Activated B cell treated with CpG ODN at 0.5 μM for 24 hours (primary cell): ENCODE measurements at regions of chr1 and their contacts with region 1.

Region 1: GRCh38 chr1:23184212-23184934 is 15.7 kb upstream of the LUZP1 start:
- DNase-seq: peak; percentile 24
- ATAC-seq: peak; percentile 37
- H3K4me3 Mint-ChIP-seq: peak overlapping the region; percentile 72
- H3K27ac Mint-ChIP-seq: no peak overlapping the region
- H3K4me1 Mint-ChIP-seq: peaks cover 4% of the 10 kb centered on the region
- H3K27me3 Mint-ChIP-seq: peaks cover 5% of the 10 kb centered on the region
- CTCF ChIP-seq: no peak

Region 2: GRCh38 chr1:22704440-22705067 is 479.8 kb before region 1 on chr1:
- CTCF ChIA-PET with region 1: interaction called, 9 read pairs
- POLR2A ChIA-PET with region 1: no interaction called
- intact Hi-C with region 1: loop called (anchors 10 kb)
- DNase-seq: peak; percentile 30
- ATAC-seq: peak; percentile 97
- H3K4me3 Mint-ChIP-seq: no peak overlapping the region
- H3K27ac Mint-ChIP-seq: no peak overlapping the region
- H3K4me1 Mint-ChIP-seq: no peaks in the 10 kb centered on the region
- H3K27me3 Mint-ChIP-seq: peaks cover 30% of the 10 kb centered on the region
- CTCF ChIP-seq: peak; percentile 33

Region 3: DNA sequence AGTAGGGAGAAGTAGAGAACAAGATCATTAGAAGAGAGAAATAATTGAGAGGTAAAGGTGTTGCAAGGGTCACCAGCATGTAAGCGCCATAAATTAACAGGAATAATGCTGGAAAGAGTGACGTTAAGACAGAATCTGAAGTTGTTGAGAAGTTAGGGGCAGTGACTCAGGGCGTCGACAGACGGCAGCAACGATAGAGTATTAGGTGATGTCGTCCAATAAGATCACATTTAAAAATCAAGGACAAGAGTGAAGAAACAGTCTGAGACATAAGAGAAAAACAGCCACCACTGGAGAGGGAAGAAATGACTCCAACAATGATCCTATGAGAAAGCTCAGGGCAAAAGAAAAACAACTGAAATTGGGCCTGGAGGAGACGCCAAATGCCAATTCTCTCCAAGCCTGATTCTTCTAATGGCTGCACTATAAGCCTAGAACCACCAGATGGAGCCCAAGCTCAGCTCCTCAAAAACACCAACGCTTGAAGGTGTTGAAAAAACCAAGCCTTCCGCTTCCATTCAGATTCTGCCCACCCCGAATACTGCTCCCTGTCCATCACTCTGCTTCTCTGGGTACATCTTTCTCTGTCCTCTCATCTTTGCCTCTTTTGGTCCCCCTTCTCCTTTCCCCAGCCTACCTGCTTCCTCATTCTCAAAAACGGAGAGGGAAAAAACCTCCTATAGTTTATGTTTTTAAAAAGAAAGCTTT is 85.8 kb before region 1 on chr1:
- CTCF ChIA-PET with region 1: interaction called, 407 read pairs
- POLR2A ChIA-PET with region 1: interaction called, 9 read pairs
- intact Hi-C with region 1: loop called (anchors 1 kb)
- DNase-seq: no peak
- ATAC-seq: peak; percentile 83
- H3K4me3 Mint-ChIP-seq: no peak overlapping the region
- H3K27ac Mint-ChIP-seq: peak overlapping the region; percentile 43
- H3K4me1 Mint-ChIP-seq: peaks cover 20% of the 10 kb centered on the region
- H3K27me3 Mint-ChIP-seq: no peaks in the 10 kb centered on the region
- CTCF ChIP-seq: peak; percentile 85

Region 4: DNA sequence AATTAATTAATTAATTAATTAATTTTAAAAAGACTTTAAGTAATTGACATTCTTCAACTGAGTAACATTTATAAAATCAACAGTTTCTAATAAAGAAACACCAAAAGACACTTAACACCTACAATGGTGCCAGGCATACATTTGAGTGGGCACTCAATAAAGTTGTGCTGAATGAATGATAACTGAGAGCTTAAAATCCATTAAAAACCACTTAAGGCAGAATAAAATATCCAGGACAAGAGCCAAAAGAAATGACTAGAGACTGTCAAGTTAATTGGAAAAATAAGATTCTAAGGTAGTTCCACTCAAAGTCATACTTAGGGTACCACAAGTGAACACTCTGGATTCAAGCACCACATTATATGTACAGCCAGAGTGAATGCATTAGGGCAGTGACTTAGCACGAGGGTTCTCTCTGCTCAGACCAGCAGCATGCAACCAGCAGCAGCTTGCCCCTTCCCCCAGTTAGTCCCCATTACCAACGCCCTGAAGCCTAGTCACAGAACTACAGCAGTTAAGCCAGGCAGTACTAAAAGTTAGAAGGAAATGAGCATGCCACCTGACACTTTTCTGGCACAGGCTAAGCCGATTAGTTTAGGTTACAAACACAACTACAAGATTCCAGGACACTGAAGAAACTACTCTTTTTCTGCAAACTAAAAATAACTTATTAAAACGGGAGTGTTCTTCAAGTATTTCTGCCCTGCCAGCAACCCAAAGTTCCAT is 62.2 kb before region 1 on chr1:
- CTCF ChIA-PET with region 1: interaction called, 23 read pairs
- POLR2A ChIA-PET with region 1: no interaction called
- intact Hi-C with region 1: no loop called
- DNase-seq: no peak
- ATAC-seq: no peak
- H3K4me3 Mint-ChIP-seq: no peak overlapping the region
- H3K27ac Mint-ChIP-seq: no peak overlapping the region
- H3K4me1 Mint-ChIP-seq: peaks cover 22% of the 10 kb centered on the region
- H3K27me3 Mint-ChIP-seq: no peaks in the 10 kb centered on the region
- CTCF ChIP-seq: no peak

Region 5: DNA sequence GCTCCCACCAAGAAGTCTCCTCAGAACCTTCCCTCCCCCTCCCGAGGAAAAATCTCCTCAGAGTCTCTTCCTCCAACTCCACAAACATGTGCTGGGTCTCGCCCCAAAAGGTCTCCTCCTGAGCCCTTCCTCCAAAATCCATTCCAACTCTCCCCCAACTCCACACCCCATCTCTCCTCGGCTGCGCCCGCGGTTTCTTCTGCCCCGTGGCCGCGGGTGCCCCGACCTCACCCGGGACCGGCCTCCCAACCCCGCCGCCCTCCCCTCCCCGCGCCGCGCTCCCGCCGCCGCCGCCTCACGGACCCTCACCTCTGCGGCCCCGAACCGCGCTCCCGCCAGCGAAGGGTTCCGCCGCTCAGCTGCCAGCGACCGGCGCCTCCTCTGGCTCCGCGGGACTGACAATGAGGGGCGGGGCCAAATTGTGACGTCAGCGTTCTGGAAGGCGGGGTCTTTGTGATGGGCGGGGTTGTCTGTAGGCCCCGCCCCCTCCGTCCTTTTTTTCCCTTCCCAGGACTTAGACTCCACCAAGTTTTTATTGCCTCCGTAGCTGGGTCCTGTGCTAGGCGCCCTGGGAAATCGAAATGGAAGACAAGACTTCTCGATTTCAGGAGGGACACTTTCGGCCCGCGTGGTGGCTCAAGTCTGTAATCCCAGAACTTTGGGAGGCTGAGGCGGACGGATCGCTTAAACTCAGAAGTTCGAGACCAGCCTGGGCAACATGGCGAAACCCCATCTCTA is 15.7 kb before region 1 on chr1 and contains the start of gene LUZP1:
- CTCF ChIA-PET with region 1: interaction called, 15 read pairs
- POLR2A ChIA-PET with region 1: interaction called, 25 read pairs
- intact Hi-C with region 1: loop called (anchors 1 kb)
- DNase-seq: peak; percentile 80
- ATAC-seq: peak; percentile 84
- H3K4me3 Mint-ChIP-seq: peak within 1 kb of the TSS; percentile 95
- H3K27ac Mint-ChIP-seq: peak within 1 kb of the TSS; percentile 80
- H3K4me1 Mint-ChIP-seq: peaks cover 23% of the 10 kb centered on the region
- H3K27me3 Mint-ChIP-seq: no peaks in the 10 kb centered on the region
- CTCF ChIP-seq: no peak
- total RNA-seq, gene LUZP1: 10.8 and 13.0 TPM in 2 replicates